ENCODE measurements at regions of chr9 and their contacts with region 1.

Region 1: DNA sequence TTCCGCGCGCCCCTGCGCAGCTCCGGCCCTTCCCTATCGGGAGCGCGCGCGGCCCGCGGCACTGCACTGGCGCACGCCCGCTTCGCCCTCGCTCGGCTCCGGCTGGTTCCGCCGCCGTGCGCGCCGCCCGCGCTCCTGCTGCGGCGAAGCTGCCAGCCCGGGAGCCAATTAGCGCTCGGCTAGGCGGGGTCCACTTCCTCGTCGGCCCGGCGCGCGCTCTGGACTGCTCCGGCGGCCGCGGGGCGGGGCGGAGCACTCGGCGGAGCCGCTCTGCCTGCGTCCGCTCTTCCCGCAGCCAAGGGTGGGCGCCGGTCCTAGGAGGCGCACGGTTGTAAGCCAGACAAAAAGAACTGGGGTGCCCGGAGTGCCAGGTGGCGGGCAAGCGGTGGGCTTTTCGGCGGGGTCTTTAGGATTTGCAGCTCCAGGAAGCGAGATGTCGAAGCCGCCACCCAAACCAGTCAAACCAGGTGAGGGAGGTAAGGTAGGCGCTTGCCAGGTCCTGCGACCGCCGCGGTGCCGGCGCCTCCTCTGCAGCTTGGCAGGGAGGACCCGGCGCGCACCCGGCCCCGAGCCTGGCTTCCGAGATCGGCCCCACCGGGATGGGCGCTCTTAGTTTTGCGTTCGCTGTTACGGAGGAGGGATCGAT is at the start of gene OSTF1:
- DNase-seq: peak; percentile 97 to 99 (median 99)
- ATAC-seq: peak; percentile 96 to 97
- H3K4me3 ChIP-seq: peak within 1 kb of the TSS; percentile 97
- H3K27ac ChIP-seq: peak within 1 kb of the TSS; percentile 99
- H3K4me1 ChIP-seq: peaks cover 5% of the 10 kb centered on the region
- H3K27me3 ChIP-seq: no peaks in the 10 kb centered on the region
- total RNA-seq, gene OSTF1: 26.4 to 35.2 (median 29.7) TPM

Region 2: GRCh38 chr9:74810200-74810599 is 278.2 kb before region 1 on chr9:
- intact Hi-C with region 1: no loop called
- DNase-seq: no peak
- ATAC-seq: peak in 1 of 2 donors; percentile 14
- H3K4me3 ChIP-seq: no peak overlapping the region
- H3K27ac ChIP-seq: no peak overlapping the region
- H3K4me1 ChIP-seq: no peaks in the 10 kb centered on the region
- H3K27me3 ChIP-seq: no peaks in the 10 kb centered on the region

Region 3: DNA sequence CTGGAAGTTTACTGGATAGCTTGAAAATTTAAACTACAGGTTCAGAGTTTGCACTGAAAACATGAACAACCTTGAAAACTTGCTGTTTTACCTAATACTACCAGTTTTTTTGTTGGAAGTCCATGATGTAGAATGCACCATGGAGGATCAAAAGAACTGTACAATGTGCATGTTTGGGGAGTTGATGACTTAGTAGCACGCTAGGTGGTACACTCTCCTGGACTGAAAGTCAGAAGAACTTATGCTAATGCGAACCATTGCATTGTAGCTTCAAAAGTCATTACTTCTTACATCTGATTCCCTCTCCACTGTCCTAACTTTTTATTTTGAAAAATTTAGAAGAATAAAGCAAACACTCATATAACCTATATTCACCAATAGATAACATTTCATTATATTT is 210.9 kb after region 1 on chr9:
- intact Hi-C with region 1: no loop called
- DNase-seq: no peak
- ATAC-seq: no peak
- H3K4me3 ChIP-seq: no peak overlapping the region
- H3K27ac ChIP-seq: no peak overlapping the region
- H3K4me1 ChIP-seq: no peaks in the 10 kb centered on the region
- H3K27me3 ChIP-seq: no peaks in the 10 kb centered on the region

Region 4: DNA sequence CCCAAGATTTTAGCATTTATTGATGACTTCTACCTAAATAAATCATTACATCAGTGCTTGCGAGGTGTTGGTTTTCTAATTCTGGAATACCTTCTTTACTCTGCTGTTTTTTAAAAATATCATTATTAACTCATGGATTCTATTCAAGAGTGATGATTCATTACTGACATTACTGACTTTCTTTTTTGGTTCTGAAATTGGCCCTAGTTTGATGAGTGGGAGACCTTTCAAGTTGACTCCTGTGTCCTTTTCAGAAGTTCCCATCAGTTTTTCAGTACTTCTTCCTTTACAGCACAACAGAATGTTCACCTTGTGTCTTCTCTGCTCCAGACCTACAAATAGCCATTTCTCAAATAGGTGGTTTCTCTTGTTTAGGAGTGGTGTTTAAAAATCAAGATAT is 916.1 kb after region 1 on chr9:
- intact Hi-C with region 1: loop called in 1 of 4 experiments (anchors 10 kb)
- DNase-seq: no peak
- ATAC-seq: no peak
- H3K4me3 ChIP-seq: no peak overlapping the region
- H3K27ac ChIP-seq: no peak overlapping the region
- H3K4me1 ChIP-seq: peaks cover 2% of the 10 kb centered on the region
- H3K27me3 ChIP-seq: no peaks in the 10 kb centered on the region